ENCODE measurements at regions of chr1 and their contacts with region 1.

Region 1: GRCh38 chr1:164558461-164559341 is at the start of gene PBX1:
- H3K4me3 ChIP-seq: peak within 1 kb of the TSS; percentile 82
- H3K27ac ChIP-seq: peak within 1 kb of the TSS; percentile 81
- H3K4me1 ChIP-seq: peaks cover 12% of the 10 kb centered on the region; the same call in 1 of the 2 replicates
- CTCF ChIP-seq: no peak

Region 2: DNA sequence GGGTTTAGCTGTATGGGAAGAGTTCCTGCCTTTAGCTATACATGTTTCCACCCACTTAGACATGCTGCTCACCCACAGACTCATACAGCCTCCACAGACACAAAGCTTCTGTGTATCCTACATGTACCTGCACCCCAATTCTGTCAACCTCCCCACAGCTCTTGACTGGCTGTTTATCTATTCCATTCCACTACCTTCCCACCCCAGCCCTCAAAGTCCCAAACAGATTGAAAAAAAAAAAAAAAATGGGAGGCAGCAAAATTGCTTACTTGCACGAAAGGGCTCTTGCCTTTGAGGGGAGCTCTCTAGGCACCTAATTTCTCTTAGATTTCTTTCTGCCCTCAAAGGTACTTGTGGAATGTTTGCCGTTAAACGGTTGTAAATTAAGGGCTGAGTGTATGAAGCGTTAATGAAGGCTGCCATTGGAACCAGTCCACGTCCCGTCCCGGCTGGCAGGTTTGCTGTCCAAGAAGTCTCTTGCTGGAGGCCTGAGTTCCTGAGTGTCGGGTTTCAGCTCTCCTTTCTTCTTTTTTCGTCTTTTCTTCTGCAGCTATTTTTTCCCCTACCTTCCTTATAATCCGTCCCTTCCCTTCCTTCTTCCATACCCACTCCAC is 43.9 kb after region 1 on chr1:
- CTCF ChIA-PET with region 1: interaction called, 4 read pairs
- POLR2A ChIA-PET with region 1: interaction called, 39 read pairs
- H3K4me3 ChIP-seq: no peak overlapping the region
- H3K27ac ChIP-seq: peak overlapping the region; percentile 66
- H3K4me1 ChIP-seq: peaks cover 37% of the 10 kb centered on the region
- CTCF ChIP-seq: peak; percentile 59; the same call in 1 of the 2 replicates

Region 3: DNA sequence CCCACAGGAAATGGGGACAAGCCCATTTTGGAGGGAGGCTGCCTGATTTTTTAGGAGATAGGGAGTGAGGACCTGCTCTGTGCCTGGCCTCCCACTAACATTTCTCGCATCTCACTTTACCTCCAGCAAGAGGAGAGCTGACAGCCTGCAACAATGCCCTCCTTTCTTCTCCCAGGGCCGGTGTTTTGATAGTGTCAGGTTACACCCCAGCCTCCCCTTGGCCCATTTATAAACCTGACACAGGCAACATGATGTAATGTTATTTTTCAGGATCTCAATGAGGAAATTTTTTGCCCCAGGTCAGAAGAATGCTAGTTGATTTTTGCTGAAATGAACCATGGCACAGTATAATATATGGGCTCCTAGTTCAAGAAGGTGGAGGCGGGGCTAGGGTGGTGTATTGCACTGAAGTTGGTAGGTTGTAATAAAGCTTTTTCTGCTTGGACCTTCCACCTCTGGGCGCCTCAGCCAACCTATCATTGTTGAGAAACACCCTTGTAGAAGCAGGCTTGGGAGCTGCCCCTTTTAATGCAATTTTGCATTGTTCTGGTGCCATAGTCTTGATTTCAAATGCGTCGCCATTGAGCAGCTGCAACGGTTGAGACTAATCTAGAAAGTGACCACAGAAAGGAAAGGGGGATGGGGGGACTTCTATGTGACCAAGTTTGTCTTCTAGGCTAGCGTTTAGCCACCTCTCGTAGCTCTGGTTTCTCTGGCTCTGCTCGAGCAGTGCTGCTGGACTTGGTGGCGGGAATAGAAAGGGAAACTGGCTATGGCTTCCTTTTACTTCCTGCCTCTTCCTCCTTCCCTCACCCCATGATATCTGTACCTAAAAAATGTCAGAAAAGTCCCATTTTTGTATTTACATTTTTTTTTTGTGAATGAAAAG is 53.3 kb after region 1 on chr1:
- CTCF ChIA-PET with region 1: interaction called, 5 read pairs
- POLR2A ChIA-PET with region 1: interaction called, 58 read pairs
- H3K4me3 ChIP-seq: peak overlapping the region; percentile 7
- H3K27ac ChIP-seq: peak overlapping the region; percentile 95
- H3K4me1 ChIP-seq: peaks cover 24% of the 10 kb centered on the region
- CTCF ChIP-seq: no peak

Region 4: DNA sequence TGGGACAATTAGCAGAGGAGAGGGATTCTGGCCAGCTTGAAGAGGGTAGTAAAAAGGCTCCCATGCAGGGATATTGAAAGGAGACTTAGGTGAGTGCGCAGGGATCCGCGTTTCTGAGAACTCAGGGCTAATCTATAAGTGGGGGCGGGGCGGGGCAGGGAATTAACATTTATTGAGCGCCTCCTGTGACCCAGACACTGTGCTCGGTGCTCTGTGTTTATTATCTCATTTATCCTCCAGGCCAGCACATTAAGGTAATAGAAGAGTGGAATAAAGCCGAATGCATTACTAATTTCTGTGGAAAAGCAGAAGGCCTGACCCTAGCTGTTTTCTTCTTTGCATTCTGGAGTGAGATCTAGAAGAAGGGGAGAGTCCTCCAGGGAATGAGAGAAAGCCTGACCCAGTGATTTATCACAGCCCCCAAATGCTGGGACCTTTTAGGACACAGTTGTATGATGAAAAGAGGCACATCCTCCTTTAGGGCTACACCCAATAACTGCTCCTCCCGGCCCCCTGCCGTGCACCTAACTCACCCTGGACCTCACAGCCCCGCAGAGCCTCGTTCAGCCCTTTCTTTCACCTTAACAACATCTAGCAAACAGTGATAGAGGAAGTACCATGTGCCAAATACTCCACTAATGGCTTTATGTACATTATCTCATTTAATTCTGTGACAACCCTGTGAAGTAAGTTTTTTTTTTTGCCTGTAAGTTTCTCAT is 317.9 kb after region 1 on chr1:
- CTCF ChIA-PET with region 1: no interaction called
- POLR2A ChIA-PET with region 1: no interaction called
- H3K4me3 ChIP-seq: no peak overlapping the region
- H3K27ac ChIP-seq: no peak overlapping the region
- H3K4me1 ChIP-seq: no peaks in the 10 kb centered on the region
- CTCF ChIP-seq: no peak